ENCODE measurements at regions of chr17 and their contacts with region 1.

Region 1: DNA sequence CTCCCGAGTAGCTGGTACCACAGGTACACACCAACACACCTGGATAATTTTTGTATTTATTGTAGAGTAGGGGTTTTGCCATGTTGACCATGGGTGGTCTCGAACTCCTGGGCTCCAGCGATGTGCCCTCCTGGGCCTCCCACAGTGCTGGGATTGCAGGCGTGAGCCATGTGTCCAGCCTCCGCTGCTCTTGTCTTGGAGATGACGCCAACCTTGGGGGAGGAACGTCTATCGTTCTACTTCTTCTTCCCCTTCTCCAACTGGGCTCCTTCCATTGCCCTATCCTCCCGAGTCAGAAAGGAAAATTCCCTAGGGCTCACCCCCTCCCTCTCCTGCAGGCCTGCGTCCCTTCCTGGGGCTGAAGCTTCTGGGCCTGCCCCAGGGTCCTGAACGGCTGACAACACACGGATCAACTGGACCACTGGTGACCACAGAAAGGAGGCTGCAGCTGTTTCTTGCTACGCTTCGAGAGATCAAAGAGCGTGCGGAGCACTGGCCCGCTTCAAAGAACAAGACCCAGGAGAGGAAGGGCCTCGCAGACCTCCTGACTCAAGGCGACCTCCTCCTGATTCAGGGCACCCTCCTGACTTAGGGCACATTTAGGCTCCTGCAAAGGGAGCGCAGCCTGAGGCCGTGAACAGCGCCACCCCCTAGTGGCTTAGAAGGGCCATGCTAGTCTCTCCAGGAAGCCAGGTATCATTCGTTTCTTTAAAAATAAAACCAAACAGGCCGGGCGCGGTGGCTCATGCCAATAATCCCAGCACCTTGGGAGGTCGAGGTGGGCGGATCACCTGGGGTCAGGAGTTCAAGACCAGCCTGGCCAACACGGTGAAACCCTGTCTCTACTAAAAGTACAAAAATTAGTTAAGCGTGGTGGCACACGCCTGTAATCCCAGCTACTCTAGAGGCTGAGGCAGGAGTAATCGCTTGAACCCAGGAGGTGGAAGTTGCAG is 48.5 kb upstream of the HELZ start:
- DNase-seq: peak; percentile 74 to 79
- ATAC-seq: peak; percentile 95 to 97
- H3K4me3 ChIP-seq: no peak overlapping the region
- H3K27ac ChIP-seq: peak overlapping the region in 1 of 2 experiments; percentile 51; a peak in 1 of 6 replicates
- H3K4me1 ChIP-seq: 0 out of 3 replicates have a peak, but pooled peaks cover 3% of the 10 kb centered on the region
- CTCF ChIP-seq: peak; percentile 70; the same call in 2 of the 3 replicates
- EP300 ChIP-seq: no peak
- POLR2A ChIP-seq: no peak
- RAD21 ChIP-seq: peak; percentile 69 to 80

Region 2: GRCh38 chr17:67272312-67273050 is 21.0 kb before region 1 on chr17:
- CTCF ChIA-PET with region 1: interaction called, 22 read pairs
- POLR2A ChIA-PET with region 1: no interaction called
- DNase-seq: peak; percentile 61 to 70
- ATAC-seq: peak; percentile 90 to 95
- H3K4me3 ChIP-seq: no peak overlapping the region
- H3K27ac ChIP-seq: no peak overlapping the region
- H3K4me1 ChIP-seq: no peaks in the 10 kb centered on the region
- CTCF ChIP-seq: peak; percentile 44
- EP300 ChIP-seq: no peak
- POLR2A ChIP-seq: no peak
- RAD21 ChIP-seq: peak in 1 of 2 experiments; percentile 40; a peak in 2 of 5 replicates

Region 3: DNA sequence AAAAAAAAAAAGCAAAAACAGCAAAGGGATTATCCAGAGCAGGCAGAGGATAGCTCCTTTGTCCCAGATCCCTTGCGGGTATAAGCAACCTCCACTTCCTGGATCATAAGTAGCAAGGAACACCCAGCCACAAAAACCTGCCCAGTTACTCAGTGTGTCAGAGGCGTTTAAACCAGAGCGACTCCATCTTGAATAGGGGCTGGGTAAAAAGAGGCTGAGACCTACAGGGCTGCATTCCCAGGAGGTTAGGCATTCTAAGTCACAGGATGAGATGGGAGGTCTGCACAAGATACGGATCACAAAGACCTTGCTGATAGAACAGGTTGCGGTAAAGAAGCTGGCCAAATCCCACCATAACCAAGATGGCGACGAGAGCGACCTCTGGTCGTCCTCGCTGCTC is 15.2 kb before region 1 on chr17:
- CTCF ChIA-PET with region 1: interaction called, 22 read pairs
- POLR2A ChIA-PET with region 1: no interaction called
- DNase-seq: no peak
- ATAC-seq: no peak
- H3K4me3 ChIP-seq: no peak overlapping the region
- H3K27ac ChIP-seq: no peak overlapping the region
- H3K4me1 ChIP-seq: no peaks in the 10 kb centered on the region
- CTCF ChIP-seq: no peak
- EP300 ChIP-seq: no peak
- POLR2A ChIP-seq: no peak
- RAD21 ChIP-seq: no peak

Region 4: GRCh38 chr17:67615011-67615561 is 321.6 kb after region 1 on chr17:
- CTCF ChIA-PET with region 1: no interaction called
- POLR2A ChIA-PET with region 1: no interaction called
- DNase-seq: no peak
- ATAC-seq: 0 out of 6 replicates have a peak, but pooled peaks have one; percentile 19 to 36
- H3K4me3 ChIP-seq: no peak overlapping the region
- H3K27ac ChIP-seq: no peak overlapping the region
- H3K4me1 ChIP-seq: no peaks in the 10 kb centered on the region
- CTCF ChIP-seq: no peak
- EP300 ChIP-seq: no peak
- POLR2A ChIP-seq: no peak
- RAD21 ChIP-seq: no peak